ENCODE measurements at regions of chr2 and their contacts with region 1.

Region 1: GRCh38 chr2:62774555-62775366 is 69.2 kb downstream of the EHBP1 start:
- DNase-seq: peak; percentile 44
- H3K4me3 ChIP-seq: no peak overlapping the region
- H3K27ac ChIP-seq: no peak overlapping the region
- H3K4me1 ChIP-seq: no peaks in the 10 kb centered on the region
- H3K27me3 ChIP-seq: no peaks in the 10 kb centered on the region
- CTCF ChIP-seq: peak; percentile 77

Region 2: GRCh38 chr2:61928826-61929461 is 845.8 kb before region 1 on chr2:
- CTCF ChIA-PET with region 1: no interaction called
- POLR2A ChIA-PET with region 1: no interaction called
- intact Hi-C with region 1: loop called (anchors 10 kb)
- DNase-seq: no peak
- H3K4me3 ChIP-seq: no peak overlapping the region
- H3K27ac ChIP-seq: no peak overlapping the region
- H3K4me1 ChIP-seq: no peaks in the 10 kb centered on the region
- H3K27me3 ChIP-seq: no peaks in the 10 kb centered on the region
- CTCF ChIP-seq: no peak